Adrenal gland (tissue), 19 donors: ENCODE measurements at regions of chr3 and their contacts with region 1.

Region 1: GRCh38 chr3:112979240-112979832 is 4.4 kb upstream of the CD200R1 start:
- DNase-seq: no peak
- H3K4me3 ChIP-seq: no peak overlapping the region
- H3K27ac ChIP-seq: no peak overlapping the region
- H3K4me1 ChIP-seq: no peaks in the 10 kb centered on the region
- H3K27me3 ChIP-seq: no peaks in the 10 kb centered on the region
- CTCF ChIP-seq: peak; percentile 54 to 76 (median 72)
- POLR2A ChIP-seq: no peak

Region 2: DNA sequence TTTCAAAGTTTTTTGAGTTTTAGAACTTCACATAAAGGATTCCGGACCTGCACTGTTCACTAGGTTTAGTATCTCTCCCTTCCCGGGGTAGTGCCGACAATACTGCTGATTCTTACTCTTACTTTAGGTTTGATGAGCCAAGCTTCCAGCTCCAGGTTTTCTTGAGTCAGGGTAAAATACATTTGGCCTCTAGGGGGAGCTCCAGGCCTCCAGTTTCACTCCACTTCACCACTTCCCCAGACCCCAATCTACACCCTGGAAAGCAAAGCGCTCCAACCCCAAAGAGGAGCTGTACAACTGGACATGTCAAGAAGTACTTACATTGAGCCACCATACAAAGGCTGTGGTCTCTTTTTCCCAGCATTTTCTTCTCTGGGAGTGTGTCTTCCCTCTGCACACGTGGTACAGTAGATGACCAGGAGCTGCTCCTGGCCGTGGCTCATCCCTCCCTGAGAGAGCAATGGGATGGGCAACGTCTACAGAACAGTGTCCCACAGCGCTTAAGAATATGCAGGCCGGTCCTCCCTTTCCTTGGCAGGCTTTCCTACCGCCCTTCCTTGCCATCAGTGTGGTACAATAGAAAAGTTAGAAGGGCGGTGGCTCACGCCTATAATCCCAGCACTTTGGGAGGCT is 244.5 kb before region 1 on chr3:
- intact Hi-C with region 1: loop called (anchors 5 to 10 kb)
- DNase-seq: peak; percentile 42 to 74 (median 50)
- H3K4me3 ChIP-seq: no peak overlapping the region
- H3K27ac ChIP-seq: no peak overlapping the region
- H3K4me1 ChIP-seq: no peaks in the 10 kb centered on the region
- H3K27me3 ChIP-seq: no peaks in the 10 kb centered on the region
- CTCF ChIP-seq: peak; percentile 52 to 74 (median 65)
- POLR2A ChIP-seq: no peak

Region 3: GRCh38 chr3:112894258-112894657 is 85.1 kb before region 1 on chr3:
- intact Hi-C with region 1: no loop called
- DNase-seq: no peak
- H3K4me3 ChIP-seq: no peak overlapping the region
- H3K27ac ChIP-seq: no peak overlapping the region
- H3K4me1 ChIP-seq: no peaks in the 10 kb centered on the region
- H3K27me3 ChIP-seq: no peaks in the 10 kb centered on the region
- CTCF ChIP-seq: no peak
- POLR2A ChIP-seq: no peak